ENCODE measurements at regions of chr1 and their contacts with region 1.

Region 1: DNA sequence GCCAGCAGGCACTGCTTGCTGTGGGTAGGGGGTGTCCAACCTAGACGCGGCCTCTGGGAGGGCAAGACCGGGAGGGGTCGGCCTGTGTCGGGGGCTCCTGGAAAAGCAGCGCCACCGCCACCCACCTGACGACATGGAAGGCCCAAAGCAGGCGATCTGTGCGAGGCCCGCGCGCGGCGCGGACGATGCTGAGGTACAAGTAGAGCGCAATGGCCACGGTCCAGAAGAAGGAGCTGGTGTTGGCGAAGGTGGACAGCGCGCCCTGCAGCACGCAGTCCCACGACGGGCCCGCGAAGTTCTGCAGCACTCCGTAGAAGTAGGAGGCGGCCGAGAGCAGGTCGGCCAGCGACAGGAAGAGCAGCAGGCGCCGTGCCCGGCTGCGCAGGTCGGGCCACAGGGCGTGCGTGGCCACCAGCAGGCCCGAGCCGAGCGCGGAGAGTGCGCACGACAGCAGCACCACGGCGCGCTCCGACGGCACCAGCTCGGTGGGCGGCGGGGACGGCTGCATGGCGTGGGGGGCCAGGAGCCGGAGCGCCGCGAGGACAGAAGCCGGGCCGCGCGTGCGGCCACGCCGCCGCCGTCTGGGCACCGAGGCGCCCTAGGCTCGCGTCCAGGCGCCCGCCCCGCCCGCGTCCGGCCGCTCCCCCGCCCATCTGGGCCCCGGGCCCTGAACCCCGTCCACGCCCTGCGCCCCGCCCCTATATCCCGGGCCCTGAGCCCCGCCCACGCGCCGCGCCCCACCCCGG is at the start of gene GPR157:
- DNase-seq: peak; percentile 73 to 79 (median 78)
- H3K4me3 ChIP-seq: peak within 1 kb of the TSS; percentile 57 to 73 (median 64)
- H3K4me3 Mint-ChIP-seq: peak within 1 kb of the TSS; percentile 90 to 94
- H3K27ac ChIP-seq: peak within 1 kb of the TSS; percentile 32 to 53
- H3K27ac Mint-ChIP-seq: peak within 1 kb of the TSS; percentile 62 to 87 (median 80)
- H3K4me1 ChIP-seq: peaks cover 28 to 45% of the 10 kb centered on the region in 2 donors
- H3K4me1 Mint-ChIP-seq: peaks cover 40% of the 10 kb centered on the region
- H3K27me3 ChIP-seq: peaks cover 0 to 16% of the 10 kb centered on the region in 2 donors
- H3K27me3 Mint-ChIP-seq: peaks cover 19 to 23% (median 20%) of the 10 kb centered on the region in 3 donors
- CTCF ChIP-seq: no peak
- polyA plus RNA-seq, gene GPR157: 0.56 to 1.1 (median 0.72) TPM

Region 2: GRCh38 chr1:9234223-9235095 is 105.8 kb after region 1 on chr1 and contains the start of gene H6PD:
- intact Hi-C with region 1: loop called (anchors 2 to 5 kb)
- DNase-seq: peak; percentile 86 to 92 (median 90)
- H3K4me3 ChIP-seq: peak within 1 kb of the TSS; percentile 54 to 85 (median 83)
- H3K4me3 Mint-ChIP-seq: peak within 1 kb of the TSS; percentile 89 to 97
- H3K27ac ChIP-seq: peak within 1 kb of the TSS; percentile 84 to 97
- H3K27ac Mint-ChIP-seq: peak within 1 kb of the TSS; percentile 96 to 98 (median 98)
- H3K4me1 ChIP-seq: peaks cover 58 to 84% of the 10 kb centered on the region in 2 donors
- H3K4me1 Mint-ChIP-seq: peaks cover 75% of the 10 kb centered on the region
- H3K27me3 ChIP-seq: peaks cover 0 to 3% of the 10 kb centered on the region in 2 donors
- H3K27me3 Mint-ChIP-seq: peaks cover 5 to 13% (median 5%) of the 10 kb centered on the region in 3 donors
- CTCF ChIP-seq: peak; percentile 68
- polyA plus RNA-seq, gene H6PD: 8.6 to 15.9 (median 11.4) TPM

Region 3: GRCh38 chr1:9275567-9276034 is 146.9 kb after region 1 on chr1:
- intact Hi-C with region 1: no loop called
- DNase-seq: peak; percentile 79 to 95 (median 89)
- H3K4me3 ChIP-seq: peak overlapping the region in 1 of 3 experiments; percentile 6
- H3K4me3 Mint-ChIP-seq: peak overlapping the region; percentile 18 to 77
- H3K27ac ChIP-seq: peak overlapping the region in 1 of 2 donors; percentile 23
- H3K27ac Mint-ChIP-seq: peak overlapping the region in 5 of 7 donors; percentile 56 to 82 (median 82)
- H3K4me1 ChIP-seq: peaks cover 41 to 43% of the 10 kb centered on the region in 2 donors
- H3K4me1 Mint-ChIP-seq: peaks cover 43% of the 10 kb centered on the region
- H3K27me3 ChIP-seq: peaks cover 0 to 5% of the 10 kb centered on the region in 2 donors
- H3K27me3 Mint-ChIP-seq: peaks cover 3 to 11% (median 9%) of the 10 kb centered on the region in 3 donors
- CTCF ChIP-seq: no peak

Measured in CD14-positive monocyte (primary cell).